ENCODE measurements at regions of chrX and their contacts with region 1.

Region 1: DNA sequence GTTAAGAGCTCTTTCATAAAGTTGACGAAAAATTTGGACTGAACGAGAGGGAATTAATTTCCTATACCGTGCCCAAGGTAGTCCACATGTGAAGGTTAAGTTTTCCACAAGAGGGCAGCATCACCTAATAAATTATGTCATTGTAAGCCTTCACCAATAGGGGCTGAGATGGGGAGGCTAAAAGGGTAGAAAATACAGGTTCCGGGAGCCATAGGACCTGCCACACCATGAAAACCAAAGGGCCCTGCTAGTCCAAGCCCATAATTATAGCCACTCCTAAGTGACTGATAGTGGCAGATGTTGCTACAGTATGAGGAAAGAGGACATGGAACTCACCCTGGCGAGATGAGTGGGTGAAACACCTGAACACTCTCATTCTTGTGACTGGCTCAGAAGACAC is 122.2 kb downstream of the SHROOM4 start:
- DNase-seq: peak; percentile 26 to 54 (median 32)
- ATAC-seq: peak; percentile 94
- H3K4me3 ChIP-seq: no peak overlapping the region
- H3K27ac ChIP-seq: no peak overlapping the region
- H3K4me1 ChIP-seq: no peaks in the 10 kb centered on the region
- H3K27me3 ChIP-seq: no peaks in the 10 kb centered on the region
- CTCF ChIP-seq: peak; percentile 59 to 87 (median 75)
- EP300 ChIP-seq: no peak
- POLR2A ChIP-seq: no peak
- RAD21 ChIP-seq: peak; percentile 33 to 54; a peak in 3 of 4 replicates

Region 2: GRCh38 chrX:50920132-50920531 is 228.3 kb after region 1 on chrX:
- CTCF ChIA-PET with region 1: no interaction called
- POLR2A ChIA-PET with region 1: no interaction called
- in situ Hi-C with region 1: no loop called
- intact Hi-C with region 1: loop called (anchors 5 kb)
- DNase-seq: peak in 1 of 4 experiments; percentile 6
- ATAC-seq: no peak
- H3K4me3 ChIP-seq: no peak overlapping the region
- H3K27ac ChIP-seq: no peak overlapping the region
- H3K4me1 ChIP-seq: no peaks in the 10 kb centered on the region
- H3K27me3 ChIP-seq: no peaks in the 10 kb centered on the region
- CTCF ChIP-seq: peak; percentile 16 to 47 (median 19); a peak in 3 of 6 replicates
- EP300 ChIP-seq: no peak
- POLR2A ChIP-seq: no peak
- RAD21 ChIP-seq: peak in 1 of 2 experiments; percentile 41; a peak in 2 of 4 replicates

Region 3: GRCh38 chrX:50988649-50989048 is 296.8 kb after region 1 on chrX:
- CTCF ChIA-PET with region 1: interaction called, 3 read pairs
- POLR2A ChIA-PET with region 1: interaction called, 3 read pairs
- in situ Hi-C with region 1: no loop called
- intact Hi-C with region 1: loop called (anchors 10 kb)
- DNase-seq: peak in 2 of 4 experiments; percentile 8 to 15
- ATAC-seq: peak; percentile 61; the same call in 2 of the 3 replicates
- H3K4me3 ChIP-seq: no peak overlapping the region
- H3K27ac ChIP-seq: no peak overlapping the region
- H3K4me1 ChIP-seq: no peaks in the 10 kb centered on the region
- H3K27me3 ChIP-seq: no peaks in the 10 kb centered on the region
- CTCF ChIP-seq: peak; percentile 25 to 59 (median 52); a peak in 5 of 6 replicates
- EP300 ChIP-seq: no peak
- POLR2A ChIP-seq: no peak
- RAD21 ChIP-seq: peak in 1 of 2 experiments; percentile 43; a peak in 2 of 4 replicates

Region 4: DNA sequence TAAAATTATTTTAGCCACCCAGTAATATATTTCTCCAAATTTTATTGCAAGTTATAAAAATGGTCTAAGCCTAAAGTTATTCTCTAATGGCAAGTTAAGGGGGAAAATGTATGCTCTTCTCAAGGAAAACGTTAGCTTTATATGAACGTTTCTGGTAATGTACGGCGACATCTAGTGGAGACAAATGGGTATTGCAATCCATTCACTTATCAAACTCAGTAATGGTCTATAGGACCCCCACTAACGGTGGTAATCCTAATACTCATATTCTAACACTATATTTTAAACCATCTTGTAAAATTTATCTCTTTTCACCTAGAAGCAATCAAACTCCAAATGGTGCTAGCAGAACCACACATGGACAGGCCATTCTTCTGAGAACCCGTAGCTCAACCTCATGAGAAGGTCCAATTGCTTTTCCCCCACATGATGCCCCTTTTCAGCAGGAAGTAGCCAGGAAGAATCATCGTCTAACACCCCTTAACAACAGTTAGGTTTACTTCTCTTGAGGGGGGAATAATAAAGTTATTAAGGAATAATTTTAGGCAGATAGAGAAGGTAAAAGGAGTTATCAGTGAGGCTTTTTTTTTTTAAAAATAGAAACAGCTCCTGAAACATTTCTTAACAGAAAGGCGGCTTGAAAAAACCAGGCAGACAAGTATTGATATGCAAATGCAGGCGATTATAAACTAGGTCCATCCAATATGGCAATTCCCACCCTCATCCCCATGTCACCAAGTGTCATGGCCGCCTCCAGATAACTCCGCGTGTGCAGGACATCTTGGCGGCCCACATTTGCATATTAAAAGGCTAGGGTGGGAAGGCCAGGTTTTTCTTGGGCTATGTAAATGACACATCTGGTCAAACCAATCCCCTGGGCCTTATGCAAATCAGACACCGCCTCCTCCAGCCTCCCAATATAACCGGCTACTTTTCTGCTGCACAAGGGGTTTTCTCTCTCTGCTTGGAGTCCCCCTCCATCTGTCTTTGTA is 769.5 kb after region 1 on chrX:
- CTCF ChIA-PET with region 1: no interaction called
- POLR2A ChIA-PET with region 1: no interaction called
- in situ Hi-C with region 1: loop called (anchors 25 kb)
- intact Hi-C with region 1: no loop called
- DNase-seq: peak; percentile 17 to 41 (median 32)
- ATAC-seq: peak; percentile 56
- H3K4me3 ChIP-seq: no peak overlapping the region
- H3K27ac ChIP-seq: no peak overlapping the region
- H3K4me1 ChIP-seq: no peaks in the 10 kb centered on the region
- H3K27me3 ChIP-seq: no peaks in the 10 kb centered on the region
- CTCF ChIP-seq: peak; percentile 46 to 54 (median 50); a peak in 5 of 6 replicates
- EP300 ChIP-seq: no peak
- POLR2A ChIP-seq: no peak
- RAD21 ChIP-seq: peak in 1 of 2 experiments; percentile 50; a peak in 2 of 4 replicates

Measured in K562 (cell line).